Upper lobe of right lung (tissue), 1 donor: ENCODE measurements at regions of chr9 and their contacts with region 1.

Region 1: GRCh38 chr9:130107234-130107861 is 53.6 kb downstream of the GPR107 start:
- DNase-seq: peak; percentile 80
- ATAC-seq: peak; percentile 90
- H3K4me3 ChIP-seq: no peak overlapping the region
- H3K27ac ChIP-seq: no peak overlapping the region
- H3K4me1 ChIP-seq: no peaks in the 10 kb centered on the region
- H3K27me3 ChIP-seq: no peaks in the 10 kb centered on the region
- CTCF ChIP-seq: peak; percentile 82

Region 2: GRCh38 chr9:130235897-130236668 is 128.7 kb after region 1 on chr9:
- intact Hi-C with region 1: loop called (anchors 5 kb)
- DNase-seq: peak; percentile 84
- ATAC-seq: peak; percentile 67
- H3K4me3 ChIP-seq: peak overlapping the region; percentile 11
- H3K27ac ChIP-seq: no peak overlapping the region
- H3K4me1 ChIP-seq: peaks cover 5% of the 10 kb centered on the region
- H3K27me3 ChIP-seq: no peaks in the 10 kb centered on the region
- CTCF ChIP-seq: peak; percentile 99

Region 3: GRCh38 chr9:130327070-130327780 is 219.9 kb after region 1 on chr9:
- intact Hi-C with region 1: no loop called
- DNase-seq: no peak
- ATAC-seq: no peak
- H3K4me3 ChIP-seq: no peak overlapping the region
- H3K27ac ChIP-seq: no peak overlapping the region
- H3K4me1 ChIP-seq: no peaks in the 10 kb centered on the region
- H3K27me3 ChIP-seq: peaks cover 37% of the 10 kb centered on the region
- CTCF ChIP-seq: peak; percentile 17

Region 4: DNA sequence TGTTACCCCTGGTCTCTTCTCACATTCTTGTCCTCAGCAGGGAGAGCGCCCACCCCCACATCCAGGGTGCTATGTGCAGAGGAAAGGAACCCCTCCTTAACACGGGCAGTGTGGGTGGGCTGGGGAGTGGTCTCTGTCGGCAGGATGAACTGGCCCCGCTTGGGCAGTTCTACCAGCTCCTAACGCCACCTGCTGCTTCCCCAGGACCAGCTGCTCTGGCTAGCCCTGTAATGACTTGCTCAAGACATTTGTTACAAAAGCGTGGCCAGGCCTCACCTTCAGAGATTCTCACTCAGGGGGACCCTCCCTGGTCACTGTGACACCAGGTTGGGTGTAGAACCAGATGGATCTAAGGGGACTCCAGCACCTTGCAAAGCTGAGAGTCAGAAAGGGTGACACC is 240.6 kb after region 1 on chr9:
- intact Hi-C with region 1: loop called (anchors 5 kb)
- DNase-seq: no peak
- ATAC-seq: no peak
- H3K4me3 ChIP-seq: no peak overlapping the region
- H3K27ac ChIP-seq: no peak overlapping the region
- H3K4me1 ChIP-seq: no peaks in the 10 kb centered on the region
- H3K27me3 ChIP-seq: no peaks in the 10 kb centered on the region
- CTCF ChIP-seq: no peak

Region 5: DNA sequence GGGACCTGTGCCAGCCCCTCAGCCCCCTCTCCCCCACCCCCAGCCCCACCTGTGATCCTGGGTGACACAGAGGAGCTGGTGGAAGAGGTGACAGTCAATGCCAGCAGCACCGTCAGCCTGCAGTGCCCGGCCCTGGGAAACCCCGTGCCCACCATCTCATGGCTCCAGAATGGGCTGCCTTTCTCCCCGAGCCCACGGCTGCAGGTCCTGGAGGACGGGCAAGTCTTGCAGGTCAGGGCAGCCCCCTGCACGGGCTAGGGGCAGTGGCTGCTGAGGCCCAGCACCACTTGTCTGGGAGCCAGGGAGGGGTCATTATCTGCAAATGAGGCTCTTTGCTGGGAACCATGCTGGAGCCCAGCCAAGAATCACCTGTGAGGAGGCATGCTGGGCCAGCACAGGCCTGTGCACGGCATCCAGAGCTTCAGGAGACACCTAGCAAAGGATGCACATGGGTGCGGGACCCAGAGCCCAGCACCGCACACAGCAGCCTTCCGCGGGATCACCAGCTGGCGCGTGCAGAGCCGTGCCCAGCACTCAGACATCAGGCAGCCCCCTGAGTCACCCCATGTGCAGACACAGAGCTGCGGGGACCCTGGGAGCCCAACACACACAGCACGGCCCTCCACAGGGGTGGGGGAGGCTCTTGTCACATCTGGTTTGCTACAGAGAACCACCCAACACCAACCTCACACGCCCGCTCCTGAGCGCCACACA is 275.4 kb after region 1 on chr9:
- intact Hi-C with region 1: no loop called
- DNase-seq: no peak
- ATAC-seq: no peak
- H3K4me3 ChIP-seq: no peak overlapping the region
- H3K27ac ChIP-seq: no peak overlapping the region
- H3K4me1 ChIP-seq: no peaks in the 10 kb centered on the region
- H3K27me3 ChIP-seq: no peaks in the 10 kb centered on the region
- CTCF ChIP-seq: no peak

Region 6: GRCh38 chr9:130535818-130536561 is 428.6 kb after region 1 on chr9:
- intact Hi-C with region 1: no loop called
- DNase-seq: no peak
- ATAC-seq: no peak
- H3K4me3 ChIP-seq: no peak overlapping the region
- H3K27ac ChIP-seq: no peak overlapping the region
- H3K4me1 ChIP-seq: peaks cover 3% of the 10 kb centered on the region
- H3K27me3 ChIP-seq: peaks cover 73% of the 10 kb centered on the region
- CTCF ChIP-seq: no peak